CD8-positive, alpha-beta T cell (primary cell): ENCODE measurements at regions of chr6 and their contacts with region 1.

Region 1: GRCh38 chr6:129730477-129731165 is 20.6 kb upstream of the ARHGAP18 start:
- DNase-seq: peak in 4 of 9 experiments; percentile 16 to 70 (median 46)
- ATAC-seq: peak; percentile 67
- H3K4me3 ChIP-seq: no peak overlapping the region
- H3K4me3 Mint-ChIP-seq: no peak overlapping the region
- H3K27ac ChIP-seq: no peak overlapping the region
- H3K27ac Mint-ChIP-seq: no peak overlapping the region
- H3K4me1 ChIP-seq: no peaks in the 10 kb centered on the region
- H3K4me1 Mint-ChIP-seq: peaks cover 11% of the 10 kb centered on the region
- H3K27me3 ChIP-seq: no peaks in the 10 kb centered on the region
- H3K27me3 Mint-ChIP-seq: no peaks in the 10 kb centered on the region
- CTCF ChIP-seq: peak; percentile 67

Region 2: GRCh38 chr6:129621247-129621646 is 109.4 kb before region 1 on chr6:
- CTCF ChIA-PET with region 1: interaction called, 3 read pairs
- POLR2A ChIA-PET with region 1: no interaction called
- intact Hi-C with region 1: loop called in 1 of 2 experiments (anchors 2 kb)
- DNase-seq: peak in 7 of 9 experiments; percentile 19 to 58 (median 39)
- ATAC-seq: no peak
- H3K4me3 ChIP-seq: no peak overlapping the region
- H3K4me3 Mint-ChIP-seq: no peak overlapping the region
- H3K27ac ChIP-seq: no peak overlapping the region
- H3K27ac Mint-ChIP-seq: no peak overlapping the region
- H3K4me1 ChIP-seq: no peaks in the 10 kb centered on the region
- H3K4me1 Mint-ChIP-seq: no peaks in the 10 kb centered on the region
- H3K27me3 ChIP-seq: no peaks in the 10 kb centered on the region
- H3K27me3 Mint-ChIP-seq: no peaks in the 10 kb centered on the region
- CTCF ChIP-seq: no peak

Region 3: DNA sequence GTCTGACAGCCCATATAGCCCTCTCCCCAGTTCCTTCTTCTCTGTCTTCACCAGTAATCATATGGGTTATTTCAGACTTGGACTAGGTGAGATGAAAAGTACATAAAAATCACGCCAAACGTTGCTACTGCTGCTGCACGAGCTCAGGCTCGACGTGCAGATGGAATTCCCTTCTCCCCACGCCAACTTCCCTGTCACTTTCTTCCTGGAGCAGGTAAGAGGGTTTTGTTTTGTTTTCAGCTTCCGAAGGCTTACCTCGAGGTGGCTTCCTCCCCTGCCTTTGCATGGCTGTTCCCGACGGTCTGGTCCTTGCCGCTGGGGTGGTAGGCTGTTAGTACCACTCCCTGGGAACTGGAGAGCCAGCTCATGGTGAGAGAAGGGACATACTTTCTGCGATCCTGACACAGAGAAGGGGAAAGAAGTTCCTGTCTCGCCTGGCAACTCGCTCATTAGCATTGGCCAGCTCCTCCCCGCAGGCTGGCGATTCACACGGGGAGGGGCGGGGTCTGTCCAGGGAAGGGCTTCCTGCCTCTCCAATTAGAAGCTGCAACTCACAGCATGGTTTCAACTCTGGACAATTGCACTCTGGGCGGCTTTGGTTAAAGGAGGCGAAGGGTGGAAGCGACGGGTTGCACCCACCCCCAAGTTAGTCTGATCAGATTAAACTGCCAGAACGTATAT is 20.7 kb before region 1 on chr6 and contains the start of gene ARHGAP18:
- CTCF ChIA-PET with region 1: interaction called, 11 read pairs
- POLR2A ChIA-PET with region 1: interaction called, 3 read pairs
- intact Hi-C with region 1: no loop called
- DNase-seq: peak; percentile 36 to 81 (median 63)
- ATAC-seq: peak; percentile 90
- H3K4me3 ChIP-seq: peak within 1 kb of the TSS; percentile 64 to 79
- H3K4me3 Mint-ChIP-seq: peak within 1 kb of the TSS; percentile 93
- H3K27ac ChIP-seq: peak within 1 kb of the TSS; percentile 8 to 56
- H3K27ac Mint-ChIP-seq: peak within 1 kb of the TSS; percentile 70
- H3K4me1 ChIP-seq: peaks cover 7% of the 10 kb centered on the region
- H3K4me1 Mint-ChIP-seq: peaks cover 34% of the 10 kb centered on the region
- H3K27me3 ChIP-seq: no peaks in the 10 kb centered on the region
- H3K27me3 Mint-ChIP-seq: no peaks in the 10 kb centered on the region
- CTCF ChIP-seq: no peak
- total RNA-seq, gene ARHGAP18: 0.71 to 1.5 TPM

Region 4: DNA sequence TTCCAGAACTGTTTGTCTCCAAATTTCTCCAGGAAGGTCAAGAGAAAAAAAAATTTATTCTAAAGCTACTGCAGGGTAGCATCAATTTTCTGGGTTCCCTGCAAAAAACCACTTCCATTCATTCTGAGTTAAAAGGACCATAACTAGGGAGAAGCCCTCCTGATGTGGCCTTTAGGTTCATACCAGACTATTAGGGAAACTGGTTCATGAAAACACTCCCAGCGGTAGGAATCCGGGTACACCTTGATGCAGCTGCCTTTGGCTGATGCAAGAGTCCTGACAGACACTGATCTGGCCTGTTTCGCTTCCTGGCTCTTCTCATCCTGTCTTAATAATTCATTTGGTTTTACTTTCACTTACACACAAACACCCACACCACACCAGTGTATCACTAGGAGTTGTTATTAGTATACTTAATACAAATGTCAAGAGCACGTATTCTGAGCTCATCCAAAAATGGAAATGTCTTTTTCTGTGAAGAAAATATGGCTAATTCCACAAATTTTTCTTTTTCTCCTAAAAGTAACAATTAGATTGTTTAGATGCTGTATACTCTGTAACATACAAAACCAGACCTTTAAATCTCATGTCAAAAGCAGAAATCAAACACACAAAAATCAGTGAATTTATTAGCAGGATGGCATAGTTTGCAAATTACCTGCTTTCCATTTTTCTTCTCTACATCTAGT is 17.7 kb after region 1 on chr6:
- CTCF ChIA-PET with region 1: interaction called, 26 read pairs
- POLR2A ChIA-PET with region 1: interaction called, 3 read pairs
- intact Hi-C with region 1: loop called in 1 of 2 experiments (anchors 2 kb)
- DNase-seq: peak in 8 of 9 experiments; percentile 25 to 85 (median 48)
- ATAC-seq: peak; percentile 84
- H3K4me3 ChIP-seq: peak overlapping the region; percentile 6 to 25
- H3K4me3 Mint-ChIP-seq: peak overlapping the region; percentile 66
- H3K27ac ChIP-seq: peak overlapping the region; percentile 49 to 87
- H3K27ac Mint-ChIP-seq: peak overlapping the region; percentile 82
- H3K4me1 ChIP-seq: peaks cover 53% of the 10 kb centered on the region
- H3K4me1 Mint-ChIP-seq: peaks cover 60% of the 10 kb centered on the region
- H3K27me3 ChIP-seq: no peaks in the 10 kb centered on the region
- H3K27me3 Mint-ChIP-seq: no peaks in the 10 kb centered on the region
- CTCF ChIP-seq: no peak